ENCODE measurements at regions of chr5 and their contacts with region 1.

Region 1: GRCh38 chr5:38265546-38266179 is 7.3 kb downstream of the EGFLAM start:
- DNase-seq: no peak

Region 2: GRCh38 chr5:38316544-38317224 is 51.0 kb after region 1 on chr5:
- intact Hi-C with region 1: loop called (anchors 5 kb)
- DNase-seq: no peak

Region 3: GRCh38 chr5:38369692-38370091 is 104.0 kb after region 1 on chr5:
- intact Hi-C with region 1: loop called (anchors 10 kb)
- DNase-seq: no peak

Measured in cardiac septum (tissue), 1 donor.